ENCODE measurements at regions of chr13 and their contacts with region 1.

Region 1: GRCh38 chr13:32528358-32528757 is 10.2 kb downstream of the N4BP2L2 start:
- DNase-seq: no peak
- H3K4me3 ChIP-seq: no peak overlapping the region
- H3K27ac ChIP-seq: no peak overlapping the region
- H3K4me1 ChIP-seq: no peaks in the 10 kb centered on the region
- H3K27me3 ChIP-seq: no peaks in the 10 kb centered on the region
- CTCF ChIP-seq: no peak
- EP300 ChIP-seq: no peak
- POLR2A ChIP-seq: no peak
- RAD21 ChIP-seq: no peak

Region 2: GRCh38 chr13:32278426-32278825 is 249.9 kb before region 1 on chr13:
- CTCF ChIA-PET with region 1: no interaction called
- POLR2A ChIA-PET with region 1: no interaction called
- DNase-seq: no peak
- H3K4me3 ChIP-seq: no peak overlapping the region
- H3K27ac ChIP-seq: no peak overlapping the region
- H3K4me1 ChIP-seq: no peaks in the 10 kb centered on the region
- H3K27me3 ChIP-seq: no peaks in the 10 kb centered on the region
- CTCF ChIP-seq: no peak
- EP300 ChIP-seq: no peak
- POLR2A ChIP-seq: no peak
- RAD21 ChIP-seq: no peak

Region 3: DNA sequence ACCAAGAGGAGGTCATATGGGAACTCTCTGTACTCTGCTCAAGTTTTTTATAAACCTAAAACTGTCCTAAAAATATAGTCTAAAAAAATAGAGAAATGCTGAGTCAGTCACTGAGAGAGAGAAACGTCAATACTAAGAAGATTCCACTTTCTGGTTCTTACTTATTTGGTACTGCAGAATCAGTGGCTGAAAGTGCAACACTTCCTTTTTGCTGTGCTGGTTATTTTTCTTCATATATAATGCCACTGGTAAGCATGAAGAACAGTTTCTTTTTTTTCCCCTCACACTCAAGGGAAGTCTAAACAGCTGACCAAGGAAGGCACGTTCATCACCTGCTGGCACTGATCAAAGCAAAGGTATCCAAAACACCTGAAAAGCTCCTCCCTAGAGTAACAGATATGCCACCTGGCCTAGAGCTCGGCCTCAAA is 56.1 kb before region 1 on chr13:
- CTCF ChIA-PET with region 1: no interaction called
- POLR2A ChIA-PET with region 1: no interaction called
- DNase-seq: no peak
- H3K4me3 ChIP-seq: no peak overlapping the region
- H3K27ac ChIP-seq: no peak overlapping the region
- H3K4me1 ChIP-seq: no peaks in the 10 kb centered on the region
- H3K27me3 ChIP-seq: no peaks in the 10 kb centered on the region
- CTCF ChIP-seq: no peak
- EP300 ChIP-seq: no peak
- POLR2A ChIP-seq: no peak
- RAD21 ChIP-seq: no peak

Region 4: DNA sequence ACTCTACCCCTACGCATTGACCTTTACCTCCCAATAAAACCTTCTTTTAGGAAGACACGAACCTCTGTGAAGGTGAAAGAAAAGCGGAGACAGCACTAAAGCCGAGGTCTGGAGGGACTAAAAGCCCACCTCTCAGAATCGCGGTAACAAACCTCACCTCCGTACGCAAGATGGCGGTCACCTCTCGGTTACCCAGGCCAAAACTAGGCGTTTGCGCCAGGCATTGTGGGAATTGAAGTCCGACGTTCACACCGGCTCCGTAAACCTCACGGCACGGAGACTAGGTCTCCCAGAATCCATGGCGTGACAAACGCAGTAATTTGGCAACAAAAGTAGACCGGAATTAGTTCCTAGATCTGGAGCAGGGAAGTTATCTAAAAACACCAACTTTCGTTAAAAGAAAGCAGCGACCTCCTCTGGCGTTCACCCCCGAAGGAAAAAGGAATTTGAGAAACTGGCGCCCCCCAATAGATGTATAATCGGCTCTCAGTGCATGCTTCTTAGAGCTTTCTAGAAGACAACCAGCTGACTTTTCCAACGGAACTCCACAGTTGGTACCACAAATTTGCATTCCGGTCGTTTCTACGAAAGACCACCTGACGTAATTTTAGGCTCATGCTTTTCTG is 10.4 kb after region 1 on chr13 and contains the start of gene N4BP2L2:
- CTCF ChIA-PET with region 1: interaction called, 4 read pairs
- POLR2A ChIA-PET with region 1: interaction called, 10 read pairs
- DNase-seq: peak; percentile 82 to 85
- H3K4me3 ChIP-seq: peak within 1 kb of the TSS; percentile 81 to 96 (median 94)
- H3K27ac ChIP-seq: peak within 1 kb of the TSS; percentile 85
- H3K4me1 ChIP-seq: no peaks in the 10 kb centered on the region; a peak in 1 of 7 replicates
- H3K27me3 ChIP-seq: no peaks in the 10 kb centered on the region
- CTCF ChIP-seq: peak in 1 of 3 experiments; percentile 11; a peak in 1 of 4 replicates
- EP300 ChIP-seq: no peak
- POLR2A ChIP-seq: peak; percentile 41 to 70; a peak in 2 of 3 replicates
- RAD21 ChIP-seq: peak; percentile 3 to 17; a peak in 2 of 4 replicates
- total RNA-seq, gene N4BP2L2: 64.0 and 67.6 TPM in 2 replicates

Measured in H1 (cell line).